WTC11 (cell line): ENCODE measurements at regions of chr1 and their contacts with region 1.

Region 1: GRCh38 chr1:11874258-11874562 is 15.5 kb upstream of the NPPB start:
- DNase-seq: no peak
- ATAC-seq: no peak
- H3K4me3 Mint-ChIP-seq: no peak overlapping the region
- H3K27ac Mint-ChIP-seq: 0 out of 2 replicates have a peak overlapping the region, but pooled peaks have one; percentile 20
- H3K4me1 Mint-ChIP-seq: no peaks in the 10 kb centered on the region
- H3K27me3 Mint-ChIP-seq: no peaks in the 10 kb centered on the region
- CTCF ChIP-seq: no peak

Region 2: GRCh38 chr1:11761988-11762406 is 112.2 kb before region 1 on chr1 and contains the start of gene C1orf167:
- CTCF ChIA-PET with region 1: no interaction called
- POLR2A ChIA-PET with region 1: no interaction called
- DNase-seq: peak; percentile 73
- ATAC-seq: peak; percentile 87
- H3K4me3 Mint-ChIP-seq: peak within 1 kb of the TSS; percentile 56
- H3K27ac Mint-ChIP-seq: no peak within 1 kb of the TSS
- H3K4me1 Mint-ChIP-seq: peaks cover 10% of the 10 kb centered on the region
- H3K27me3 Mint-ChIP-seq: peaks cover 59% of the 10 kb centered on the region
- CTCF ChIP-seq: no peak
- total RNA-seq, gene C1orf167: 1.2 to 3.1 TPM (median 2.8 TPM) in 3 replicates

Region 3: DNA sequence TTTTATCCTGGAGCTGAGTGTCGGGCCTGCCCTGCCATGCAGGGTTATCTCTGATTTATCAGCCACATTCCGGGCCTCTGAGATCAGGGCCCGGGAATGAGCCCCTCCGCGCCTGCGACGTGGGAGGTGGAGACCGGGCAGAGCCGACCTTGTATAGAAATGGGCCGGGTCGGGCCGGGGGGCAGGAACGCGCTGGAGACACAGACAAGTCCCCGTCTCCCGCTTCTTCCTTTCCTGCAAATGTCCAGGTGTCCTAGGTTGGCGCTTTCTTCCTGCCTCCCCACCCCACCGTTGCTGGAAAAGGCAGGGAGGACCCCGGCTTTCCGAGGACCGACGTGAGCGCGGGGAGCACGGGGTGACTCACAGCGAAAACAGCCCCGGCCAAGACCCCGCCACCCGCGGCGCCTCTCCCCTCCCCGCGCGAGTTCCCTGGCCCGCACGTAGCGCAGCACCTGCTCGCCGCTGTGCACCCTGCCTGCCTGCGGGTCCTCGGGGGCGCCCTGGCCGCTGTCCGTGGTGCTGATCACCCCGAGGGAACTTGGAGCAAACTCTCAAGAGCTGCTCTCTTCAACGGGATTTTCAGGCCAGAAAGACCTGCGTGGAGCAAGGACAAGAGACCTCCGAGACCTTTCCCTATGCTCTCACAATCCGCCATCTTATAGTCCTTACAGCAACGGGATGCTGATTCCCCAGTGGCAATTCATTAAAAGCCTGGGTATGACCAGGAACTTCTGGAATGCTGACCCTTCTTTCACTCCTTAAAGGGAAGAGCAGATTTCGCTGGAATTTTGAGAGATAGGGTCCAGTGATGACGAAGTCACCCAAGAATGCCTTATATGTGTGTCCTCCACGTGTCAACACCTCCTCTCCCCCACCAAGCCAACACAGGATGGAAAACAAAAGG is 15.0 kb before region 1 on chr1:
- CTCF ChIA-PET with region 1: interaction called, 11 read pairs
- POLR2A ChIA-PET with region 1: no interaction called
- DNase-seq: peak; percentile 92
- ATAC-seq: peak; percentile 80
- H3K4me3 Mint-ChIP-seq: peak overlapping the region; percentile 29
- H3K27ac Mint-ChIP-seq: no peak overlapping the region
- H3K4me1 Mint-ChIP-seq: no peaks in the 10 kb centered on the region
- H3K27me3 Mint-ChIP-seq: peaks cover 46% of the 10 kb centered on the region
- CTCF ChIP-seq: no peak

Region 4: DNA sequence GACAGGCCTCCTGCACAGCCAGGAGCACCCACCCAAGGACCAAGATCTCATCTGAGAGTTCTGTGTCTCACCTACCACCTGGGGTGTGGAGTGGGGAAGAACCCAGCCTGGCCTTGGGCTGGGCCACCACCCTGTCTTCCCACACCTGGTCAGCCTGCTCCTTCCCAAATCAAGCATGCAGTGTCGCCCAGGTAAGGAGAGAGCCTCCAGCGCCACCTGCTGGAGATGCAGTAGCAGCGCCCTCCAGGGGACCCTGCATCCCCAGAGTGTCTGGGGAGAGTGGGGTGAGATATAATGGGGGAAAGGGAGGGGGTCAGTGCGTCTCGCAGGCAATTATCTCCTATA is 19.7 kb after region 1 on chr1:
- CTCF ChIA-PET with region 1: interaction called, 6 read pairs
- POLR2A ChIA-PET with region 1: interaction called, 10 read pairs
- DNase-seq: peak; percentile 87
- ATAC-seq: peak; percentile 91
- H3K4me3 Mint-ChIP-seq: no peak overlapping the region
- H3K27ac Mint-ChIP-seq: no peak overlapping the region
- H3K4me1 Mint-ChIP-seq: no peaks in the 10 kb centered on the region
- H3K27me3 Mint-ChIP-seq: no peaks in the 10 kb centered on the region; the same call in 1 of the 2 replicates
- CTCF ChIP-seq: peak; percentile 77